CD8-positive, alpha-beta T cell (primary cell): ENCODE measurements at regions of chr19 and their contacts with region 1.

Region 1: DNA sequence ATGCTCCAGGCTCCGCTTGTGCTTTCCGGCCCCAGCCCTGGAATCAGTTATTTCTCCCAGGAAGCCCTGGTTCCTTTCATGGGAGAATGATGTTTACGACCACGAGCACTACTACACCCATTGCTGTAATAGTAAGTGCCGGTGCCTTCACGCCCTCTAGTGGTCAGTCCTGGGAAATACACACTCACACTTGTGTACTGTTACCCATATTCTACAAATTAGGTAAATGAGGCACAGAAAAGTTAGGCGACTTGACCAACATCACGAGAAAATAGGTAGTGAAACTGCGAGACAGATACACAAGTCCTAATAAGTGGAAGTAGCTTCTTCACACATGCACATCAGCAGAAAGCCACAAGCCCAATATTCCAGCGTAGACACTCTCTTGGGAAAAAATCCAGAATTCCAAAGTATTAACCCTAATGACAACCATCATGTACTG is 21.7 kb downstream of the CEACAM21 start:
- DNase-seq: peak; percentile 52 to 84 (median 73)
- ATAC-seq: peak; percentile 86
- H3K4me3 ChIP-seq: no peak overlapping the region
- H3K4me3 Mint-ChIP-seq: no peak overlapping the region
- H3K27ac ChIP-seq: no peak overlapping the region
- H3K27ac Mint-ChIP-seq: no peak overlapping the region
- H3K4me1 ChIP-seq: no peaks in the 10 kb centered on the region
- H3K4me1 Mint-ChIP-seq: peaks cover 6% of the 10 kb centered on the region
- H3K27me3 ChIP-seq: no peaks in the 10 kb centered on the region
- H3K27me3 Mint-ChIP-seq: peaks cover 42% of the 10 kb centered on the region
- CTCF ChIP-seq: peak; percentile 92

Region 2: DNA sequence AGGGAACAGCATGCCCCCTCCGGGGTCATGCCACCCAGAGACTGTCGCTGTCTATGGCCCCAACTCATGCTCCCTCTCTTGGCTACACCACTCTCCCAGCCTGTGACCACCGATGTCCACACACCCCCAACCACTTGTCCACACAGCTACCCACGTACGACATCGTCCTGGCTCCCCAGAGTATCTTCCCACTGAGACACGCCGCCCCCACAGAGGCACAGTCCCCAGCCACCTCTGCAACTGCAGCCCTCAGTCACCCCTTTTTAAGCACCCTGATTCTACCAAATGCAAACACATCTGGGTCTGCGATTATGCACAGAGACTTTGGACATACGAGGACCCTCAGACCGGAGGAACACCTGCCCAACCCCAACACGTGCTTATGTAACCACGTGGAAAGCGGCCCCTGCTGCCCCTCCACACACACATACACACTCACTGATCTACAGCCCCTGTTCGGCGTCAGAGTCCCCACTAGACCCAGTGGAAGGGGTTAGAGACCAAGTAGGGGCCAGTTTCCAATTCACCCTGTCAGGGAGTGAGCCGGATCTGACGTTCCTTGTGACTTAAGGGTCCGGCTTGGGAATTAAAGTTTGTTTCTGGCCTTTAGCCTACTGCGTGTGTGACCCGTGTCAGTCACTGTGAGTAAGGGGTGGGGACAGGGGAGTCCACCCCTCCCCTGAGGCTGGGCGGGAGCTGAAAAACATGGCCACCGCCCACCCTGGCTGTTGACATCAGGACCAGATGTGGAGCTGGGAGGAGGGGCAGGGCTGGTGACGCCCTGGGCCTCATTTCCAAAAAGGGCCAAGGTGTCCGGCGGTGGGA is 390.5 kb before region 1 on chr19:
- CTCF ChIA-PET with region 1: no interaction called
- POLR2A ChIA-PET with region 1: no interaction called
- intact Hi-C with region 1: loop called (anchors 2 to 10 kb)
- DNase-seq: no peak
- ATAC-seq: no peak
- H3K4me3 ChIP-seq: no peak overlapping the region
- H3K4me3 Mint-ChIP-seq: no peak overlapping the region
- H3K27ac ChIP-seq: no peak overlapping the region
- H3K27ac Mint-ChIP-seq: no peak overlapping the region
- H3K4me1 ChIP-seq: no peaks in the 10 kb centered on the region
- H3K4me1 Mint-ChIP-seq: peaks cover 6% of the 10 kb centered on the region
- H3K27me3 ChIP-seq: no peaks in the 10 kb centered on the region
- H3K27me3 Mint-ChIP-seq: no peaks in the 10 kb centered on the region
- CTCF ChIP-seq: no peak

Region 3: GRCh38 chr19:41449079-41449864 is 148.3 kb before region 1 on chr19:
- CTCF ChIA-PET with region 1: interaction called, 38 read pairs
- POLR2A ChIA-PET with region 1: no interaction called
- intact Hi-C with region 1: loop called in 1 of 2 experiments (anchors 1 kb)
- DNase-seq: peak; percentile 49 to 86 (median 71)
- ATAC-seq: peak; percentile 87
- H3K4me3 ChIP-seq: peak overlapping the region; percentile 23 to 37
- H3K4me3 Mint-ChIP-seq: peak overlapping the region; percentile 73
- H3K27ac ChIP-seq: no peak overlapping the region
- H3K27ac Mint-ChIP-seq: no peak overlapping the region
- H3K4me1 ChIP-seq: peaks cover 5% of the 10 kb centered on the region
- H3K4me1 Mint-ChIP-seq: peaks cover 5% of the 10 kb centered on the region
- H3K27me3 ChIP-seq: peaks cover 0 to 8% of the 10 kb centered on the region in 2 experiments
- H3K27me3 Mint-ChIP-seq: peaks cover 13% of the 10 kb centered on the region
- CTCF ChIP-seq: peak; percentile 99

Region 4: DNA sequence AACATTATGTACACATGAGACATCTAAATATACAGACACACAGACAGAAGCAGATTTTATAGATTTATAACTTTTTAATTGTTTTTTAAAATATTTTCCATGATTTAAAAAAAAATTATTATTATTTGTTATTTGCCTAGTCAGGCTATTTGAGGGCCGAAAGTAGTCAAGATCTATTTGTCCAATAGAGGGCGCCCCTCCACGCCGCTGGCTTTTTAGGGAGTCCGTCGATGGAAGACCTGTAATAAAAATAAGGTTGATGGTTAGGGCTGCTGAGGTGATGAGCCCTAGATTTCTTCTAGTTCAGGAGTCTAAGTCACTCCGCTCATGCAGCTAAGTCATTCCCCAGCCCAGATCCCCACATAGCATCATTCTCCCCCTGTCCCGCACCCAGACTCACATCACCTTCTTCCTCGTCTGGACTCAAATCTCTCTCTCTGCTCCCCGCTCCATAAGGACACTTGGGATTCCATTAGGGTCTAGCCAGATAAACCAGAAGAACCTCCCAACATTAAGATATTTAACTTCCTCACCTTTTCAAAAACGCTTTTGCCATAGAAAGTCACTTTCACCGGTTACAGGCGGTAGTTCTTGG is 55.5 kb before region 1 on chr19:
- CTCF ChIA-PET with region 1: interaction called, 14 read pairs
- POLR2A ChIA-PET with region 1: no interaction called
- intact Hi-C with region 1: loop called (anchors 1 kb)
- DNase-seq: peak; percentile 55 to 89 (median 83)
- ATAC-seq: no peak
- H3K4me3 ChIP-seq: no peak overlapping the region
- H3K4me3 Mint-ChIP-seq: no peak overlapping the region
- H3K27ac ChIP-seq: no peak overlapping the region
- H3K27ac Mint-ChIP-seq: no peak overlapping the region
- H3K4me1 ChIP-seq: peaks cover 46% of the 10 kb centered on the region
- H3K4me1 Mint-ChIP-seq: peaks cover 43% of the 10 kb centered on the region
- H3K27me3 ChIP-seq: no peaks in the 10 kb centered on the region
- H3K27me3 Mint-ChIP-seq: peaks cover 4% of the 10 kb centered on the region
- CTCF ChIP-seq: peak; percentile 73

Region 5: DNA sequence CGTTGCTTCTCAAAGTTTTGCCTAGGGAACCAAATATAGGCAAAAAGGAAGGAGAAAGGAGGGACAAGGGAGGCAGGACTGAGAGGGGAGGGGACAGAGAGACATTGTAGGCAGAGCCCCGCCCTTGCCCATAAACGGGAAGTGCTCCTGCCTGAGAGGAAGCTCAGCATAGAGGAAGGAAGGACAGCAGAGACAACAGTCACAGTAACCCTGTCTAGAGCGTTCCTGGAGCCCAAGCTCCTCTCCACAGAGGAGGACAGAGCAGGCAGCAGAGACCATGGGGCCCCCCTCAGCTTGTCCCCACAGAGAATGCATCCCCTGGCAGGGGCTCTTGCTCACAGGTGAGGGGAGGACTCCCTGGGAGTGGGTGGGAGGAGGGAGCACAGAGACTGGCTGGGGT is 21.6 kb before region 1 on chr19 and contains the start of gene CEACAM21:
- CTCF ChIA-PET with region 1: interaction called, 47 read pairs
- POLR2A ChIA-PET with region 1: no interaction called
- intact Hi-C with region 1: loop called in 1 of 2 experiments (anchors 2 kb)
- DNase-seq: peak in 6 of 9 experiments; percentile 33 to 68 (median 46)
- ATAC-seq: peak; percentile 96
- H3K4me3 ChIP-seq: peak within 1 kb of the TSS; percentile 9 to 15
- H3K4me3 Mint-ChIP-seq: peak within 1 kb of the TSS; percentile 65
- H3K27ac ChIP-seq: peak within 1 kb of the TSS; percentile 4 to 63
- H3K27ac Mint-ChIP-seq: peak within 1 kb of the TSS; percentile 78
- H3K4me1 ChIP-seq: peaks cover 23% of the 10 kb centered on the region
- H3K4me1 Mint-ChIP-seq: peaks cover 24% of the 10 kb centered on the region
- H3K27me3 ChIP-seq: no peaks in the 10 kb centered on the region
- H3K27me3 Mint-ChIP-seq: peaks cover 7% of the 10 kb centered on the region
- CTCF ChIP-seq: no peak
- total RNA-seq, gene CEACAM21: 8.3 to 8.8 TPM

Region 6: GRCh38 chr19:41671491-41671890 is 73.9 kb after region 1 on chr19:
- CTCF ChIA-PET with region 1: no interaction called
- POLR2A ChIA-PET with region 1: no interaction called
- intact Hi-C with region 1: no loop called
- DNase-seq: no peak
- ATAC-seq: no peak
- H3K4me3 ChIP-seq: no peak overlapping the region
- H3K4me3 Mint-ChIP-seq: no peak overlapping the region
- H3K27ac ChIP-seq: no peak overlapping the region
- H3K27ac Mint-ChIP-seq: no peak overlapping the region
- H3K4me1 ChIP-seq: no peaks in the 10 kb centered on the region
- H3K4me1 Mint-ChIP-seq: no peaks in the 10 kb centered on the region
- H3K27me3 ChIP-seq: peaks cover 0 to 2% of the 10 kb centered on the region in 2 experiments
- H3K27me3 Mint-ChIP-seq: peaks cover 58% of the 10 kb centered on the region
- CTCF ChIP-seq: no peak